ENCODE measurements at regions of chr6 and their contacts with region 1.

Region 1: DNA sequence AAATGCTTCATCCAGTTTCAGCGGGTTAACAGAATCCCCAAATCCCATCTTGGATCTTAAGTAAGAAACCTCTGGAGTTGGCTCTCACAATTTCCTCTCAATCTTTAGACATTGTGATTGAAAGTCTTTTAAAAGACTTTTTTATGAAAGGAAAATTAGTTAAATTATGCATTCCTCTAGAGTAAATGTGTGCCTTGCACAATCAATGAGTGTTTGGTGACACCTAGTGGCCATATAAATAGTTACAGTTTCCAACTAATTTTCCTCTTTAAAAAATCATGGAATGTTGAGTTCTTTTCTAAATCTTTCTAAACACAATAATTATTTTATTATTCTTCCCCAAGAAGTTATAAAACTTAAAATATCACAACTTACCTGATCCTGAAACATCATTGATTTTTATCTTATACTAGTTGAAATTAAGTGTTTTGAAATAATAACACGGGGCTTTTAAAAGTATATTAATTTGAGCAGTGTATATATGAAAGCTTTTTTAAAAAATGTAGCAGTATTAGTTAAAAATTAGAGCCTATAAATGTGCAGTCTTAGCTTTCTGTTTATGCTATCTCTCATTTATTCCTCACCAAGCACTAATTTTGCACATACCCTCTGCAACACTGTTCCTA is 66.4 kb downstream of the PKHD1 start:
- DNase-seq: no peak
- ATAC-seq: peak; percentile 52; the same call in 2 of the 3 replicates
- H3K4me3 ChIP-seq: no peak overlapping the region
- H3K27ac ChIP-seq: no peak overlapping the region
- H3K4me1 ChIP-seq: no peaks in the 10 kb centered on the region
- H3K27me3 ChIP-seq: no peaks in the 10 kb centered on the region; a peak in 1 of 4 replicates
- CTCF ChIP-seq: peak; percentile 45 to 70 (median 48); a peak in 4 of 6 replicates
- EP300 ChIP-seq: no peak
- POLR2A ChIP-seq: no peak
- RAD21 ChIP-seq: peak; percentile 93

Region 2: DNA sequence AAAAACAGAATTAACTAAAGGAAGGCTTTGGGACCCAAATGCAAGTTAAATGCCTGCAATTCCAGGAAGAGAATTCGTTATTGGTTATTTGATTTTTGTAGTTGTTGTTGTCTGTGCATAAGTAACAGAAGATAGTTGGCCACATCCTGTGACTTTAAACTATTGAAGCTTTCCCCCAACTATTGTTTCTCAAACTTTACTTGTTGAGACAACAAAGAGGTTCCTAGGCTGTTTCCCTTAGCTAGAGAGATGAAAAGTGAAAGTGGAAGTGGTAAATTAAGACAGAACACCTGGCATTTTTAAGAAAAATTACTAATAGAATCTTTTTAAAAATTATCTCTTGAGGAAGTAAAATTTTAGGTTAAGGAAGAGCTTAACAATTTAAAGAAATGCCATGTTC is 458.9 kb before region 1 on chr6:
- CTCF ChIA-PET with region 1: interaction called, 5 read pairs
- POLR2A ChIA-PET with region 1: no interaction called
- RAD21 ChIA-PET with region 1: no interaction called
- SMC1A ChIA-PET with region 1: no interaction called
- in situ Hi-C with region 1: no loop called
- intact Hi-C with region 1: loop called (anchors 10 kb)
- DNase-seq: peak; percentile 19
- ATAC-seq: peak; percentile 92
- H3K4me3 ChIP-seq: no peak overlapping the region
- H3K27ac ChIP-seq: no peak overlapping the region
- H3K4me1 ChIP-seq: no peaks in the 10 kb centered on the region
- H3K27me3 ChIP-seq: no peaks in the 10 kb centered on the region; a peak in 1 of 4 replicates
- CTCF ChIP-seq: no peak
- EP300 ChIP-seq: no peak
- POLR2A ChIP-seq: no peak
- RAD21 ChIP-seq: no peak

Region 3: GRCh38 chr6:51996296-51996947 is 24.6 kb before region 1 on chr6:
- CTCF ChIA-PET with region 1: interaction called, 29 read pairs
- POLR2A ChIA-PET with region 1: no interaction called
- RAD21 ChIA-PET with region 1: interaction called, 7 read pairs
- SMC1A ChIA-PET with region 1: interaction called, 6 read pairs
- in situ Hi-C with region 1: no loop called
- intact Hi-C with region 1: no loop called
- DNase-seq: peak; percentile 72
- ATAC-seq: peak; percentile 95
- H3K4me3 ChIP-seq: 0 out of 2 replicates have a peak overlapping the region, but pooled peaks have one; percentile 3
- H3K27ac ChIP-seq: peak overlapping the region; percentile 64
- H3K4me1 ChIP-seq: peaks cover 14% of the 10 kb centered on the region
- H3K27me3 ChIP-seq: no peaks in the 10 kb centered on the region
- CTCF ChIP-seq: no peak
- EP300 ChIP-seq: peak in 1 of 2 experiments; percentile 60; a peak in 1 of 4 replicates
- POLR2A ChIP-seq: no peak
- RAD21 ChIP-seq: no peak

Region 4: DNA sequence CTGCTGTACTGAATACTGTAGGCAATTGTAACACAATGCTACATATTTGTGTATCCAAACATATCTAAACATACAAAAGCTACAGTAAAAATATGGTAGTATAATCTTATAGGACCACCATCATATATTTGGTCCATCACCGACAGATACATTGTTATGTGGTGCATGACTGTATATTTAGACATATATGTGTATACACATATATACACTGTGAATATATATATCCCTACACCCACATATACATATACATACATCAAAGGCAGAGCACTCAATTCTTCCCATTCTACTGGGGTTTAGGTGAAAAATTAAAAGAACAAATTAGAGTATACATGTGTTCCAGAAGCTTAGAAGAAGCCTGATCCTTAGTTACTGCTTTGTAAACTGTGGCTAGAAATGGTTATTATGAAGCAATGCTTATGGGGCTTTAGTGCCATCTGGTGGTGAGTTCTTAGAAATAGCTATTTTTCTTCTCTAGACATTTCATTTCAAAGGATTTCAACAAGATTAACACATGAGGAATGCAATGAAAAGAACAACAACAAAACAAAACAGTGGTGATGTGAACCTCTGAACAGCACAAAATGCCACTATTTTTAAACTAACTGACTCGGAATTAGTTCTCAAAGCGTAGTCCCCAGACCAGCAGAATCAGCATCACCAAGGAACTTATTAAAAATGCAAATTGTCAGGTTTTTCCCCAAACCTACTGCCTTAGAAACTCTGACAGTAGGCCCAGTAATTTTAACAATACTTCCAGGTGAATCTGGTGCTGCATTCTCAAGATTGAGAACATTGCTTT is 28.4 kb after region 1 on chr6:
- CTCF ChIA-PET with region 1: interaction called, 44 read pairs
- POLR2A ChIA-PET with region 1: no interaction called
- RAD21 ChIA-PET with region 1: interaction called, 8 read pairs
- SMC1A ChIA-PET with region 1: interaction called, 51 read pairs
- in situ Hi-C with region 1: no loop called
- intact Hi-C with region 1: no loop called
- DNase-seq: peak; percentile 11
- ATAC-seq: peak; percentile 75
- H3K4me3 ChIP-seq: no peak overlapping the region
- H3K27ac ChIP-seq: no peak overlapping the region
- H3K4me1 ChIP-seq: no peaks in the 10 kb centered on the region
- H3K27me3 ChIP-seq: peaks cover 0 to 8% of the 10 kb centered on the region in 2 experiments; a peak in 2 of 4 replicates
- CTCF ChIP-seq: peak; percentile 56 to 70 (median 62)
- EP300 ChIP-seq: no peak
- POLR2A ChIP-seq: no peak
- RAD21 ChIP-seq: peak; percentile 67